ENCODE measurements at regions of chr6 and their contacts with region 1.

Region 1: DNA sequence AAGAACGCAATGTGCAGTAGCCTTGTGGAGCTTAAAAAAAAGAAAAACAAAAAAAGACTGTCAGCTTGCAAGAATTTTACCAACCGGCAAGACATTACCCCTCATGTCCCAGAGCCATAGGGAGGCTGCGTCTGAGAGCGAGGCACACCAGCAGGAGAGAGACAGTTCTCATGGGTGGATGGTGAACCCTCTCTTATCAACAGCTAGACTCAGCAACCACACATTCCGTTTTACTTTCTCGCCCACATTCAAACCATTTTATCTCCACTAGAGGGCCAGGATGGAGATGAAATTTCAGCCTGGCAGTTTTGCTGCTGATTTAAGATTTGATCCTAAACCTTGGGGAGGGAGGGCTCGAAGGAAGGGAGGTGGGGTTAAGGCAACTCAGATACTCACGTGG is 247.0 kb downstream of the ATXN1 start:
- DNase-seq: peak; percentile 51
- ATAC-seq: peak; percentile 62
- H3K4me3 Mint-ChIP-seq: no peak overlapping the region
- H3K27ac Mint-ChIP-seq: no peak overlapping the region
- H3K4me1 Mint-ChIP-seq: peaks cover 69% of the 10 kb centered on the region
- H3K27me3 Mint-ChIP-seq: no peaks in the 10 kb centered on the region

Region 2: DNA sequence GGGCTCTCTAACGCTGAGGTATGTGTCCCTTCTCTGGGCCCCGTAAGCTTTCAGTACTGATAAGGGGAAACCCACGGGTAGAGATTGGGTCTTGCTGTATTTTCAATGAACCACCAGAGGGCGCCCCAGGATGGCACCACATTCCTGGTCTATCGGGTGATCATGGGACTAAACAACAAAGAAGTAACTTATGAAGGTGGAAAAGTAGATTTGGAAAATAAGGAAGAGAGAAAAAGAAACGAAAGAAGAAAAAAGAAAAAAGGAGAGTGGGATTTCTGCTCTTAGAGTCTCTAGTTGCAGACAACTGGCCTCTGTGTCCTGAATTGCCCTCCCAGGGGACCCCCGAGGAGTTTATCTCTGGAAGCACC is 182.1 kb before region 1 on chr6:
- CTCF ChIA-PET with region 1: interaction called, 35 read pairs
- POLR2A ChIA-PET with region 1: no interaction called
- DNase-seq: peak; percentile 86
- ATAC-seq: peak; percentile 94
- H3K4me3 Mint-ChIP-seq: no peak overlapping the region
- H3K27ac Mint-ChIP-seq: no peak overlapping the region
- H3K4me1 Mint-ChIP-seq: no peaks in the 10 kb centered on the region
- H3K27me3 Mint-ChIP-seq: no peaks in the 10 kb centered on the region

Region 3: GRCh38 chr6:16471222-16471909 is 42.9 kb before region 1 on chr6:
- CTCF ChIA-PET with region 1: interaction called, 59 read pairs
- POLR2A ChIA-PET with region 1: no interaction called
- DNase-seq: no peak
- ATAC-seq: peak; percentile 20
- H3K4me3 Mint-ChIP-seq: no peak overlapping the region
- H3K27ac Mint-ChIP-seq: peak overlapping the region; percentile 61
- H3K4me1 Mint-ChIP-seq: peaks cover 71% of the 10 kb centered on the region
- H3K27me3 Mint-ChIP-seq: no peaks in the 10 kb centered on the region

Region 4: DNA sequence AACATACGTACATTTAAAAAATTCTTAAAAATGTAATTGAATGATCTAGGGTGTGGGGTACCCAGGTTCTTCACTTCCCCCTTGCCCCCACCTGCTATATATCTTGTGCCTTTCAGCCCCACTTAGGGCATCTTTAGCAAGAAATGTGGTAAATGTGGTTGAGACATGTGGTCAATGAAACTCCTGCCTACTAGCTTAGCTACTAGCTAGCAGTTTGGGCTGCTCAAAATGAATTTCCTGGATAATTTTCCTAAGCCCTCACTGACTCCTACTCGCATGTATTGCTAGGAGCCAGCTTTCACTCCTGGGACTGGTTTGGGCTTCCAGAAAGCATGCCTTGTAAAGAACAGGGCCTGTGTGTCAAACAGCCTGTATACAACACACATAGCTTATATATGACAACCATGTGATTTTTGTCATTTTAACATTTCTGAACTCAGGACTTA is 10.3 kb before region 1 on chr6:
- CTCF ChIA-PET with region 1: interaction called, 37 read pairs
- POLR2A ChIA-PET with region 1: no interaction called
- DNase-seq: peak; percentile 53
- ATAC-seq: peak; percentile 79
- H3K4me3 Mint-ChIP-seq: peak overlapping the region; percentile 36
- H3K27ac Mint-ChIP-seq: peak overlapping the region; percentile 39
- H3K4me1 Mint-ChIP-seq: peaks cover 30% of the 10 kb centered on the region
- H3K27me3 Mint-ChIP-seq: no peaks in the 10 kb centered on the region

Region 5: DNA sequence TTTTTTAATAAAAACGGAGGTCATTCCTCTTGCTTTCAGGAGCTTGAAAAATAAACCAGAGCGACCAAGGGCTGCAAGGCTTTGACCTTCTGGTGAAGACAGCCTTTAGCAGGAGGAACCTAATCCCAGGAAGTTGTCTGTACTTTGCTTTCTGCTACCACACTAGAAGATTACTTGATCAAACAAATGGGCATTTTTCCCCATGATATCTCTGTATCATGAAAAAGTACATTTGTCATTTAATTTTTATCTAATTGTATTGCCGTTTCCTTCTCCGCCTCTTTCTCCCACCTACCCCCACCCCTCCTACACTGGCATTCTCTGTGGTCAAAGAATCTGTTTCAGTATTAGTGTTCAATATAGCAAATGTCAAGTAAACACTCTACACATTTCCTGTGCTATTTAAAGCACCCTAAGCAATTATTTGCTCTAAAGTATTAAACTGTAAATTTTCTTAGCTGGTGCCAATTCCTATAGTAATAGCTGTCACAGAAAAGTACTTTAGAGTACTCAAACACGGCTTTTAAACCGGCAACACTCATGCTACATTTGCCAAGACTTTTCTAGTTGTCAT is 217.3 kb after region 1 on chr6:
- CTCF ChIA-PET with region 1: interaction called, 16 read pairs
- POLR2A ChIA-PET with region 1: interaction called, 5 read pairs
- DNase-seq: peak; percentile 62
- ATAC-seq: peak; percentile 87
- H3K4me3 Mint-ChIP-seq: peak overlapping the region; percentile 63
- H3K27ac Mint-ChIP-seq: peak overlapping the region; percentile 82
- H3K4me1 Mint-ChIP-seq: peaks cover 65% of the 10 kb centered on the region
- H3K27me3 Mint-ChIP-seq: no peaks in the 10 kb centered on the region